ENCODE measurements at regions of chr19 and their contacts with region 1.

Region 1: GRCh38 chr19:21851596-21852345 is 15.8 kb upstream of the ZNF43 start:
- DNase-seq: peak; percentile 87 to 93 (median 87)
- H3K4me3 ChIP-seq: peak overlapping the region; percentile 7 to 91
- H3K4me3 Mint-ChIP-seq: peak overlapping the region; percentile 93 to 98 (median 94)
- H3K27ac ChIP-seq: peak overlapping the region; percentile 83
- H3K27ac Mint-ChIP-seq: peak overlapping the region; percentile 89 to 95 (median 94)
- H3K4me1 ChIP-seq: peaks cover 10% of the 10 kb centered on the region
- H3K4me1 Mint-ChIP-seq: peaks cover 13 to 29% (median 20%) of the 10 kb centered on the region in 4 donors
- H3K27me3 ChIP-seq: no peaks in the 10 kb centered on the region
- H3K27me3 Mint-ChIP-seq: peaks cover 0 to 1% of the 10 kb centered on the region in 2 donors

Region 2: DNA sequence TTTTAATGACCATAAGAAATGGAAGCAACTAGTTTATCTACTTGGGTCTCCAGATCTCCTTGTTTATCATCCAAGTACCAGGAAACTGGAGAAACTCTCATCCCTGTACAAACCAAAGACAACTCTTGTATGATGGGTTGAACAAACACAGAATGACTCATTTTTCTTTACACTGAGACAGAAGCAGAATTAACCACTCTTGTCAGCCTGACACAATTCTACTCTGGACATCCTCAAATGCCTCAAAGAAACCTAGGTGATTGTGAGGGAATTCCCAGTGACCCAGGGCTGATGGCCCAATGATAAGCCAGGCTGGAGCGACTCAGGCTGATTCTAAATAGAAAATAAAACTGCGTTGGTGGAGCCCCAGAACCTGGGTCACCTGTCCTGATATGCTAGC is 1437.6 kb before region 1 on chr19:
- CTCF ChIA-PET with region 1: no interaction called
- POLR2A ChIA-PET with region 1: no interaction called
- intact Hi-C with region 1: no loop called
- DNase-seq: no peak
- H3K4me3 ChIP-seq: no peak overlapping the region
- H3K4me3 Mint-ChIP-seq: no peak overlapping the region
- H3K27ac ChIP-seq: no peak overlapping the region
- H3K27ac Mint-ChIP-seq: peak overlapping the region in 1 of 7 donors; percentile 22
- H3K4me1 ChIP-seq: no peaks in the 10 kb centered on the region
- H3K4me1 Mint-ChIP-seq: peaks cover 0 to 4% (median under 1%) of the 10 kb centered on the region in 4 donors
- H3K27me3 ChIP-seq: no peaks in the 10 kb centered on the region
- H3K27me3 Mint-ChIP-seq: no peaks in the 10 kb centered on the region

Region 3: DNA sequence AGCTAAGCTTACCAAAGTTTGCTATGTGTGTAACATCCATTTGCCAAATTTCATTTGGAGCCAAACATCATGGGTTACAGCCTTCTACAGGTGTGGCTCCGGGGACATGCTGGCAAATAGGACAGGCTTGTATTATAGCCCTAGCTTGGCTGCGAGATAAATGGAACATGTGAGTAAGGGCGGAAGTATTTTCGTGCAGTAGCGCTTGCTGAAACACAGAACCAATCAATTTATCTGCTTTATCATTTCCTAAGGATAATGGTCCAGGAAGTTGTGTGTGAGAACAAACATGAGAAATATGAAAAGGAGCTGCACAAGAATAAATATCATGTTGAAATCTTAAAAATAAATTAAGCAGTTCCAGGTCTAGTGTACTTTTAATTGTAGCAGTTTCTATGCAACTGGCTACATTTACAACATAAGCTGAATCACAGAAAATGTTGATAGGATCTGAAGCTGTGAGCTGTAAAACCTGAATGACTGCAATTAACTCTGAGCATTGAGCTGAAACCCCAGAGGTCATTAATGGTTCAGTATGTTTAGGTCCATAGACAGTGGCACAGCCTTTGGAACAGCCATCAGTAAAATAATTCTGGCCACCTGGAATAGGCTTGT is 62.2 kb before region 1 on chr19:
- CTCF ChIA-PET with region 1: no interaction called
- POLR2A ChIA-PET with region 1: no interaction called
- intact Hi-C with region 1: no loop called
- DNase-seq: no peak
- H3K4me3 ChIP-seq: no peak overlapping the region
- H3K4me3 Mint-ChIP-seq: no peak overlapping the region
- H3K27ac ChIP-seq: no peak overlapping the region
- H3K27ac Mint-ChIP-seq: no peak overlapping the region
- H3K4me1 ChIP-seq: no peaks in the 10 kb centered on the region
- H3K4me1 Mint-ChIP-seq: no peaks in the 10 kb centered on the region
- H3K27me3 ChIP-seq: no peaks in the 10 kb centered on the region
- H3K27me3 Mint-ChIP-seq: peaks cover 2 to 8% of the 10 kb centered on the region in 2 donors

Region 4: GRCh38 chr19:21835810-21836444 is 15.8 kb before region 1 on chr19 and contains the start of gene ZNF43:
- CTCF ChIA-PET with region 1: interaction called, 4 read pairs
- POLR2A ChIA-PET with region 1: interaction called, 85 read pairs
- intact Hi-C with region 1: loop called (anchors 1 kb)
- DNase-seq: peak; percentile 92 to 95 (median 92)
- H3K4me3 ChIP-seq: peak within 1 kb of the TSS; percentile 73 to 93
- H3K4me3 Mint-ChIP-seq: peak within 1 kb of the TSS; percentile 97 to 99 (median 99)
- H3K27ac ChIP-seq: peak within 1 kb of the TSS; percentile 80
- H3K27ac Mint-ChIP-seq: peak within 1 kb of the TSS; percentile 95 to 99 (median 98)
- H3K4me1 ChIP-seq: peaks cover 16% of the 10 kb centered on the region
- H3K4me1 Mint-ChIP-seq: peaks cover 15 to 44% (median 31%) of the 10 kb centered on the region in 4 donors
- H3K27me3 ChIP-seq: no peaks in the 10 kb centered on the region
- H3K27me3 Mint-ChIP-seq: no peaks in the 10 kb centered on the region
- total RNA-seq, gene ZNF43: 27.6 to 31.9 TPM

Region 5: DNA sequence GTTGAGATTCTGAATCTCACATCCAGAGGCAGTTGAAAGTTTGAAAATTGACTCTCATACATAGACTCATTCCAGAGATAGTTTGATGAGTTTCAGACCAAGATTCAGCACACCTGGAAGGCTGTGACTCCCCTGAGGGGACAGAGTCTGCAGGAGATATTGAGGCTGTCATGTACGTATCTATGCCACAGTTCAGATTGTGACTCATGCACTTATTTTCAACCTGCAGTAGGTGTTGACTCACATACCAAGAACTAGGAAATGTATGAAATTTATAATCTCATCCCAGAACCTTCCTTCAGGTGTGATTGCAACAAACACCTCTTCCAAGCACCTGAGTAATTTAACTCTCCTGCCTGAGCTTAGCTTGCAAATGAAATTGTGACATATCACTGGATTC is 48.6 kb after region 1 on chr19:
- CTCF ChIA-PET with region 1: no interaction called
- POLR2A ChIA-PET with region 1: no interaction called
- intact Hi-C with region 1: no loop called
- DNase-seq: no peak
- H3K4me3 ChIP-seq: no peak overlapping the region
- H3K4me3 Mint-ChIP-seq: no peak overlapping the region
- H3K27ac ChIP-seq: no peak overlapping the region
- H3K27ac Mint-ChIP-seq: no peak overlapping the region
- H3K4me1 ChIP-seq: no peaks in the 10 kb centered on the region
- H3K4me1 Mint-ChIP-seq: no peaks in the 10 kb centered on the region
- H3K27me3 ChIP-seq: no peaks in the 10 kb centered on the region
- H3K27me3 Mint-ChIP-seq: no peaks in the 10 kb centered on the region